ENCODE measurements at regions of chr5 and their contacts with region 1.

Region 1: DNA sequence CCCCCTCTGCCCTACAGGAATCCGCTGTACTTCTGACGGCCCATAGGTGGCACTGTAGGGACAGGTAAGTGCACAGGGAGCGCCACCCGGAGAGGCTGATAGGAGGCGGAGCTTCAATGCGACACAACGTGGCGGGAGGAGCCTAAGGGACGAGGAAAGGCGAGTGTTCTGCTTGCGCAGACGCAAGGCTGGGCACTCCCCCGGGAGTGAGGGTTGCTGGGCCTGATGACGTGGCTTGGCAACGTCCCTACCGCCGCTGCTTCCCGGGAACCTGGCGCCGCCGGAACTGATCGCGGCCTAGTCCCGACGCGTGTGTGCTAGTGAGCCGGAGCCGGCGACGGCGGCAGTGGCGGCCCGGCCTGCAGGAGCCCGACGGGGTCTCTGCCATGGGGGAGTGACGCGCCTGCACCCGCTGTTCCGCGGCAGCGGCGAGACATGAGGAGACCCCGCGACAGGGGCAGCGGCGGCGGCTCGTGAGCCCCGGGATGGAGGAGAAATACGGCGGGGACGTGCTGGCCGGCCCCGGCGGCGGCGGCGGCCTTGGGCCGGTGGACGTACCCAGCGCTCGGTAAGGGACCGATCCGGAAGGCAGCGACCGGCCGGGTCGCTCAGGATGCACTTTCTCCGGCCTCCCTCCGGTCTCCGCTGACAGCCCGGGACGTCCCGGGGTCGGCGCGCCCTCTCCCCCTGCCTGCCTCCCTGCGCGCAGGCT is at the start of gene SLC30A5:
- DNase-seq: peak; percentile 100
- H3K4me3 Mint-ChIP-seq: peak within 1 kb of the TSS; percentile 94
- H3K27ac Mint-ChIP-seq: peak within 1 kb of the TSS; percentile 97
- H3K4me1 Mint-ChIP-seq: peaks cover 27% of the 10 kb centered on the region
- H3K27me3 Mint-ChIP-seq: no peaks in the 10 kb centered on the region
- total RNA-seq, gene SLC30A5: 60.2 and 65.4 TPM in 2 replicates

Region 2: GRCh38 chr5:69035665-69036064 is 58.3 kb before region 1 on chr5:
- intact Hi-C with region 1: no loop called
- DNase-seq: no peak
- H3K4me3 Mint-ChIP-seq: no peak overlapping the region
- H3K27ac Mint-ChIP-seq: no peak overlapping the region
- H3K4me1 Mint-ChIP-seq: no peaks in the 10 kb centered on the region
- H3K27me3 Mint-ChIP-seq: peaks cover 19% of the 10 kb centered on the region

Region 3: DNA sequence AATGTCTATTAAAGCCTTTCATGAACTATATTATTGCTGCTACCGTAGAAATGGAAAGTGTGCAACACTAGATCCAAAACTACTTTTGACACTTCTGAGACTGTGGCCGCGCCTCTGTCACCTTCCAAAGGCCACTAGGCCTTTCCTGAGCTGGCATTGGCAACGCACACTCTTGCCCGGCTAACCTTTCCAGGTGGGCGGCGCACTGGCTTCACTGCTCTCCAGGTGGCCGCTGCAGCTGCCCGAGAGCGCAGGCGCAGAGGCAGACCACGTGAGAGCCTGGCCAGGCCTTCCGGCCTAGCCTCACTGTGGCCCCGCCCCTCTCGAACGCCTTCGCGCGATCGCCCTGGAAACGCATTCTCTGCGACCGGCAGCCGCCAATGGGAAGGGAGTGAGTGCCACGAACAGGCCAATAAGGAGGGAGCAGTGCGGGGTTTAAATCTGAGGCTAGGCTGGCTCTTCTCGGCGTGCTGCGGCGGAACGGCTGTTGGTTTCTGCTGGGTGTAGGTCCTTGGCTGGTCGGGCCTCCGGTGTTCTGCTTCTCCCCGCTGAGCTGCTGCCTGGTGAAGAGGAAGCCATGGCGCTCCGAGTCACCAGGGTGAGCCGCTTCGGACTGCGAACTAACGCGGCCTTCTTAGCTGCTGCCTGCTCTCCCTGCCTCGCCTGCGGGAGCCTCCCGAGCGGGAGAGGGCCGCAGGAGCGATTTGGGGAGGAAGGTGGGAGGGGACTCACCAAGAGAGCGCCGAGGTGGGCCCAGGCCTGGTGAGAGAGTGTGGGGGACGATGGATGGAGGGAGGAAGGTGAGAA is 73.0 kb after region 1 on chr5 and contains the start of gene CCNB1:
- intact Hi-C with region 1: loop called (anchors 1 kb)
- DNase-seq: peak; percentile 100
- H3K4me3 Mint-ChIP-seq: peak within 1 kb of the TSS; percentile 98
- H3K27ac Mint-ChIP-seq: peak within 1 kb of the TSS; percentile 95
- H3K4me1 Mint-ChIP-seq: peaks cover 33% of the 10 kb centered on the region
- H3K27me3 Mint-ChIP-seq: peaks cover 2% of the 10 kb centered on the region
- total RNA-seq, gene CCNB1: 117 and 122 TPM in 2 replicates

Region 4: DNA sequence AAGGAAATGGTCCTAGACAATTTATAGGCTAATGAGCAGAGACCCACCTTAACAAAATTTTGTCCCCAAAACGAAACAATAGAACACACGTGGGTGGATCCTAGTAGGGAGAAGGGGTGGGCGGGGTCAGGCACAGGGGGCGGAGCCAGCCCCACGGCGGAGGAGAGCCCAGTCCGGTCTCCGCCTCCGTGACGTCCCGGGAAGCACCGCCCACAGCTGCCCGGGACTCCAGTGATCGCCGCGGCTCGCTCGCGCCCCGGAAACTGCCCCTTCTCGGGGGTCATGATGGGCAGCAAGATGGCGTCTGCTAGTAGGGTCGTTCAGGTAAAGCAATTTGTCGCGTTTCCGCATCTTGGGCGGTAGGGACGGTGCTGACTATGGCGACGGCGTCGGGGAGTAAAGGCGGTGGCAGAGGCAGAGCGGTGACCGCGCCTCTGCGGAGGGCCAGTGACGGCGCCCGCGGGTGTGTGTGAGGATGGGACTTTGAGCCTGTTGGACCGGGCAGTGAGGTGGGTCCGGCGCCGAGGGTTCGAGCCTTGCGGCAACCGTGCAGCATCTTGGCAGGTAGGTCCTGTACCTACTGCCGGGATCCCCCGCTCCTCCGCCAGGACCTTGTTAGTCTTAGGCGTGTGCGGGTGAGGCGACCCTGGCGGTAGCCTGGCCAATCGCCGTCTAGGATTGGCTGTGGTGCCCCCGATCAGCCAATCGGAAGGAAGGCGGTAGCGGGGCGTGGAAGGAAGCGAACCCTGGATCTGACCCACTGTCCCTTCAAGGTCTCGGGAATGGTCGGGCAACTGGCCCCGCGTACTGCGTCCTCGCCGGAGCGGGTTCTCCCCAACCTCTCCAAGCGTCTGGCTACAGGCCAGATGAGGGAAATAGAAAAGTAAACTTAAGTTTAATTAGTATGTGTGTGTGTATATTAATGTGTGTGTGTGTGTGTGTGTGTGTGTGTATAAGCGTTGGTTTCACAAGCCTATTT is 123.9 kb after region 1 on chr5:
- intact Hi-C with region 1: loop called (anchors 1 kb)
- DNase-seq: peak; percentile 98
- H3K4me3 Mint-ChIP-seq: peak overlapping the region; percentile 96
- H3K27ac Mint-ChIP-seq: peak overlapping the region; percentile 98
- H3K4me1 Mint-ChIP-seq: peaks cover 17% of the 10 kb centered on the region
- H3K27me3 Mint-ChIP-seq: no peaks in the 10 kb centered on the region

Region 5: DNA sequence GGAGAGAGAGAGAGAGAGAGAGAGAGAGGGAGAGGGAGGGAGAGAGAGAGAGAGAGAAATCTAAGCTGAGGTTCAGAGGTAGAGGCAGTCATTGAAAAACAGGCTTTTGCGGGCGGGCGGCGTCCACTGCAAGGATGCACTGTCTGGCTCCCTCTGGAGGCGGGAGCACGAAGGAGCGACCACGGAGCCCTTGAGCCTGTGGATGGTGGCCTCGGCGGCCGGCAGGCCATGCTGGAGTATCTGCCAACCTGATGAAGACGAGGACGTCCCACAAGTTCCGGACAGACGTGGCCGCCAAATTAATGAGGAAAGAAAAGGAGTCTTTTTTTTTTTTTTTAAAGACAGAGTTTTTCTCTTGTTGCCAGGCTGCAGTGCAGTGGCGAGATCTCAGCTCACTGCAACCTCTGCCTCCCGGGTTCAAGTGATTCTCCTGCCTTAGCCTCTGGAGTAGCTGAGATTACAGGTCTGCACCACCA is 240.9 kb after region 1 on chr5:
- intact Hi-C with region 1: loop called (anchors 1 kb)
- DNase-seq: peak; percentile 93
- H3K4me3 Mint-ChIP-seq: no peak overlapping the region
- H3K27ac Mint-ChIP-seq: peak overlapping the region; percentile 3
- H3K4me1 Mint-ChIP-seq: peaks cover 17% of the 10 kb centered on the region
- H3K27me3 Mint-ChIP-seq: no peaks in the 10 kb centered on the region